H1 (cell line): ENCODE measurements at regions of chr20 and their contacts with region 1.

Region 1: GRCh38 chr20:18276821-18277220 is 11.5 kb upstream of the ZNF133 start:
- DNase-seq: peak; percentile 50 to 88
- H3K4me3 ChIP-seq: no peak overlapping the region
- H3K27ac ChIP-seq: no peak overlapping the region
- H3K4me1 ChIP-seq: no peaks in the 10 kb centered on the region
- H3K27me3 ChIP-seq: no peaks in the 10 kb centered on the region; a peak in 1 of 7 replicates
- CTCF ChIP-seq: peak; percentile 83 to 97 (median 93)
- EP300 ChIP-seq: no peak
- POLR2A ChIP-seq: no peak
- RAD21 ChIP-seq: peak; percentile 93 to 98

Region 2: GRCh38 chr20:18215566-18215965 is 61.3 kb before region 1 on chr20:
- CTCF ChIA-PET with region 1: no interaction called
- POLR2A ChIA-PET with region 1: no interaction called
- DNase-seq: no peak
- H3K4me3 ChIP-seq: no peak overlapping the region
- H3K27ac ChIP-seq: no peak overlapping the region
- H3K4me1 ChIP-seq: no peaks in the 10 kb centered on the region
- H3K27me3 ChIP-seq: no peaks in the 10 kb centered on the region
- CTCF ChIP-seq: no peak
- EP300 ChIP-seq: no peak
- POLR2A ChIP-seq: no peak
- RAD21 ChIP-seq: no peak

Region 3: GRCh38 chr20:18252597-18253451 is 24.0 kb before region 1 on chr20:
- CTCF ChIA-PET with region 1: interaction called, 10 read pairs
- POLR2A ChIA-PET with region 1: no interaction called
- DNase-seq: no peak
- H3K4me3 ChIP-seq: no peak overlapping the region
- H3K27ac ChIP-seq: no peak overlapping the region
- H3K4me1 ChIP-seq: no peaks in the 10 kb centered on the region
- H3K27me3 ChIP-seq: no peaks in the 10 kb centered on the region; a peak in 1 of 7 replicates
- CTCF ChIP-seq: no peak
- EP300 ChIP-seq: no peak
- POLR2A ChIP-seq: no peak
- RAD21 ChIP-seq: no peak

Region 4: GRCh38 chr20:18287915-18288748 is 11.3 kb after region 1 on chr20 and contains the start of gene ZNF133:
- CTCF ChIA-PET with region 1: interaction called, 4 read pairs
- POLR2A ChIA-PET with region 1: interaction called, 10 read pairs
- DNase-seq: peak; percentile 85 to 99
- H3K4me3 ChIP-seq: peak within 1 kb of the TSS; percentile 84 to 93 (median 92)
- H3K27ac ChIP-seq: peak within 1 kb of the TSS; percentile 87
- H3K4me1 ChIP-seq: peaks cover 0 to 6% (median 2%) of the 10 kb centered on the region in 4 experiments; a peak in 1 of 7 replicates
- H3K27me3 ChIP-seq: no peaks in the 10 kb centered on the region
- CTCF ChIP-seq: peak in 1 of 3 experiments; percentile 4; a peak in 2 of 4 replicates
- EP300 ChIP-seq: no peak
- POLR2A ChIP-seq: peak; percentile 88 to 95
- RAD21 ChIP-seq: peak; percentile 11 to 14; a peak in 1 of 4 replicates
- total RNA-seq, gene ZNF133: 12.1 and 14.3 TPM in 2 replicates